K562 (cell line): ENCODE measurements at regions of chr11 and their contacts with region 1.

Region 1: GRCh38 chr11:111777094-111778046 is 11.2 kb upstream of the PPP2R1B start:
- DNase-seq: peak; percentile 59 to 77 (median 65)
- ATAC-seq: peak; percentile 97
- H3K4me3 ChIP-seq: no peak overlapping the region
- H3K27ac ChIP-seq: 0 out of 3 replicates have a peak overlapping the region, but pooled peaks have one; percentile 6
- H3K4me1 ChIP-seq: no peaks in the 10 kb centered on the region
- H3K27me3 ChIP-seq: no peaks in the 10 kb centered on the region
- CTCF ChIP-seq: peak; percentile 71 to 90 (median 75)
- EP300 ChIP-seq: no peak
- POLR2A ChIP-seq: no peak
- RAD21 ChIP-seq: peak; percentile 95 to 97

Region 2: DNA sequence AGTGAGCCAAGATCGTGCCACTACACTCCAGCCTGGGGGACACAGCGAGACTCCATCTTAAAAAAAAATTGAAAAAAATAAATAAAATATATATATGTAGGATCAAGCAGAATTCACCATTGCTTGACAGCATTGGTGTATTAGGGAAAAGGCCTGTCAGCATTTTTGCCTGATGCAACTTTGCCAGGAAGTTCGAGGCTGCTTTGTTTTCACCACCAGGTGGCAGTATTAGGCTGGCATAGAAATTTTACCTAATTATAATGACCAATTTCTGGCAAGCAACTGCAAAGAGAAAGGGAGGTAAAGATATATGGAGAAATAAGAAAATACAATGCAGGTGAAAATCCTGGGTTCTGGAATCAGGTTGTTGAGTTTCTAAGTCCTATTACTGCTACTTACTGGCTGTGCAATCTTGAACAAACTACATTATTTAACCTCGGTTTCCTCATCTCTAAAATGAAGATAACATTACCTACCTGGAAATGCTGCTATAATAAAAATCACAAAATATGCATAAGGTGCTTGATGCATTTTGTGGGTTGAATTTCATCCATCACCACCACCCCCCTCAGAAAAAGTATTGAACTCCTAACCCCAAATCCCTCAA is 212.2 kb before region 1 on chr11:
- CTCF ChIA-PET with region 1: interaction called, 22 read pairs
- POLR2A ChIA-PET with region 1: interaction called, 4 read pairs
- in situ Hi-C with region 1: no loop called
- intact Hi-C with region 1: loop called (anchors 1 kb)
- DNase-seq: peak; percentile 62 to 77 (median 70)
- ATAC-seq: peak; percentile 80
- H3K4me3 ChIP-seq: no peak overlapping the region
- H3K27ac ChIP-seq: no peak overlapping the region
- H3K4me1 ChIP-seq: no peaks in the 10 kb centered on the region; a peak in 1 of 5 replicates
- H3K27me3 ChIP-seq: no peaks in the 10 kb centered on the region; a peak in 1 of 5 replicates
- CTCF ChIP-seq: peak; percentile 72 to 89 (median 76)
- EP300 ChIP-seq: 0 out of 2 replicates have a peak, but pooled peaks have one; percentile 17
- POLR2A ChIP-seq: no peak
- RAD21 ChIP-seq: peak; percentile 82 to 86

Region 3: DNA sequence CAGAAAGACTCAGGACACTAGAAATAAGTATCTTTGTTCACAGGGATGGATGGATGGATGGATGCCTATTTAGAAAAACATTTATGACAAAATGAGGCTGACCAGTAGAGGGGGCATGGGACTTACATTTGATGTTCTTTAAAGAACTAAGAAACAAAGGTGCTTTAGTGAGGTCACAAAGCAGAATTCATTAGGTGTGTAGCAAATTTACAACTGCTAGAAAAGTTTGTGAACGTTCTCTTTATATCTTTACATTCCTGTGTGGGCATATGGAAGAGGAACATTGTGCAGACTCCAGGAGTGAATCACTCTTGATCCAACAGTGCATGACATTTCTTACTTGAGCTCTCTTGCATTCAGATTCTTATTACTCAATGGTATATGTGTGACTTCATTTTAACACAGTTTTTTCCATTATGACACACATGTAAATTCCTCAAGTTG is 191.0 kb before region 1 on chr11:
- CTCF ChIA-PET with region 1: interaction called, 19 read pairs
- POLR2A ChIA-PET with region 1: interaction called, 3 read pairs
- in situ Hi-C with region 1: no loop called
- intact Hi-C with region 1: loop called (anchors 1 kb)
- DNase-seq: peak; percentile 25 to 64 (median 39)
- ATAC-seq: peak; percentile 75
- H3K4me3 ChIP-seq: no peak overlapping the region
- H3K27ac ChIP-seq: no peak overlapping the region
- H3K4me1 ChIP-seq: no peaks in the 10 kb centered on the region
- H3K27me3 ChIP-seq: 0 out of 5 replicates have a peak, but pooled peaks cover 0 to 2% of the 10 kb centered on the region in 2 experiments
- CTCF ChIP-seq: peak; percentile 44 to 73 (median 69); a peak in 5 of 6 replicates
- EP300 ChIP-seq: no peak
- POLR2A ChIP-seq: no peak
- RAD21 ChIP-seq: peak; percentile 59 to 81